B cell (primary cell): ENCODE measurements at regions of chr12 and their contacts with region 1.

Region 1: GRCh38 chr12:31406345-31406744 is 80.4 kb upstream of the SINHCAF start:
- DNase-seq: peak; percentile 55
- ATAC-seq: peak; percentile 26
- H3K4me3 ChIP-seq: no peak overlapping the region
- H3K4me3 Mint-ChIP-seq: peak overlapping the region; percentile 40
- H3K27ac ChIP-seq: peak overlapping the region; percentile 50 to 51
- H3K27ac Mint-ChIP-seq: peak overlapping the region; percentile 28
- H3K4me1 ChIP-seq: peaks cover 23 to 44% of the 10 kb centered on the region in 2 donors
- H3K4me1 Mint-ChIP-seq: peaks cover 24% of the 10 kb centered on the region
- H3K27me3 ChIP-seq: no peaks in the 10 kb centered on the region
- H3K27me3 Mint-ChIP-seq: no peaks in the 10 kb centered on the region
- CTCF ChIP-seq: no peak

Region 2: GRCh38 chr12:30847259-30847658 is 559.1 kb before region 1 on chr12:
- CTCF ChIA-PET with region 1: no interaction called
- POLR2A ChIA-PET with region 1: no interaction called
- intact Hi-C with region 1: loop called (anchors 5 kb)
- DNase-seq: peak; percentile 71
- ATAC-seq: no peak
- H3K4me3 ChIP-seq: no peak overlapping the region
- H3K4me3 Mint-ChIP-seq: no peak overlapping the region
- H3K27ac ChIP-seq: no peak overlapping the region
- H3K27ac Mint-ChIP-seq: no peak overlapping the region
- H3K4me1 ChIP-seq: peaks cover 5 to 16% of the 10 kb centered on the region in 2 donors
- H3K4me1 Mint-ChIP-seq: peaks cover 10% of the 10 kb centered on the region
- H3K27me3 ChIP-seq: no peaks in the 10 kb centered on the region
- H3K27me3 Mint-ChIP-seq: peaks cover 8% of the 10 kb centered on the region
- CTCF ChIP-seq: peak; percentile 81

Region 3: GRCh38 chr12:31297572-31298512 is 108.5 kb before region 1 on chr12:
- CTCF ChIA-PET with region 1: no interaction called
- POLR2A ChIA-PET with region 1: no interaction called
- intact Hi-C with region 1: no loop called
- DNase-seq: no peak
- ATAC-seq: peak; percentile 19
- H3K4me3 ChIP-seq: no peak overlapping the region
- H3K4me3 Mint-ChIP-seq: peak overlapping the region; percentile 75
- H3K27ac ChIP-seq: peak overlapping the region; percentile 27 to 66
- H3K27ac Mint-ChIP-seq: peak overlapping the region; percentile 86
- H3K4me1 ChIP-seq: peaks cover 25 to 27% of the 10 kb centered on the region in 2 donors
- H3K4me1 Mint-ChIP-seq: peaks cover 49% of the 10 kb centered on the region
- H3K27me3 ChIP-seq: no peaks in the 10 kb centered on the region
- H3K27me3 Mint-ChIP-seq: no peaks in the 10 kb centered on the region
- CTCF ChIP-seq: no peak

Region 4: DNA sequence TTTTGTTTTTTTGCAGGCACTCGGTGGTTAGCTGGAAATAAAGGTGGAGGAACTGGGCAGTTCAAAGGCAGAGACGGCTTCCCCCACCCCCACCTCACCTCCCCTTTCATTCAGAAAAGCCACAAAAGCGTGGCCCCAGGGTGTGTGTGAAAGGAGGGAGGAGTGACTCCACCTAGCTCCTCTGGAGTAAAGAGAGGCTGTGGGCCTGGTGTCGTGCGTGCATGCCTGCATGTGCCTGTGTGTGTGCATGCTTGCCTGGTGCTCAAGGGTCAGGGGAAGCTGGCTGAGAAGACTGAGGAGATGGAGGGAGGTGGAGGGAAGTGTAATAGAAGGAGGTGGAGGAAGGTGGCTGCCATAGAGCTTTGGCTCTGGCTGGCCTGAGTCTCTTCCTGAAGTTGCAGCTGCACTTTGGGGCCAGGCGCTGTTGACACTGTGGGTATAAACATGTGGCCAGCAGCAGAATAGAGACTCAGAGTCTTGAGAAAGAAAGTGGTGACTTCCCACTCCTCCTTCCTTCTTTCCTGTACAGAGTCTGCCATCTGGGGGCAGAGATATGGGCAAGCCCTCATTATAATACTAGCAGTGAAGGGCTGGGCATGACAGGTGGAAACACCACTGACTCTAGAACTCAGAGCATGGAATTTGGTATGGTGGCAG is 43.5 kb before region 1 on chr12:
- CTCF ChIA-PET with region 1: no interaction called
- POLR2A ChIA-PET with region 1: no interaction called
- intact Hi-C with region 1: no loop called
- DNase-seq: peak; percentile 60
- ATAC-seq: peak; percentile 80
- H3K4me3 ChIP-seq: peak overlapping the region in 2 of 5 experiments; percentile 19 to 25
- H3K4me3 Mint-ChIP-seq: peak overlapping the region; percentile 59
- H3K27ac ChIP-seq: peak overlapping the region in 1 of 2 donors; percentile 7
- H3K27ac Mint-ChIP-seq: peak overlapping the region; percentile 46
- H3K4me1 ChIP-seq: peaks cover 16 to 21% of the 10 kb centered on the region in 2 donors
- H3K4me1 Mint-ChIP-seq: peaks cover 22% of the 10 kb centered on the region
- H3K27me3 ChIP-seq: no peaks in the 10 kb centered on the region
- H3K27me3 Mint-ChIP-seq: no peaks in the 10 kb centered on the region
- CTCF ChIP-seq: no peak

Region 5: GRCh38 chr12:31589904-31590641 is 183.7 kb after region 1 on chr12:
- CTCF ChIA-PET with region 1: interaction called, 7 read pairs
- POLR2A ChIA-PET with region 1: interaction called, 3 read pairs
- intact Hi-C with region 1: loop called (anchors 1 kb)
- DNase-seq: peak; percentile 78
- ATAC-seq: peak; percentile 29
- H3K4me3 ChIP-seq: peak overlapping the region; percentile 65 to 95 (median 78)
- H3K4me3 Mint-ChIP-seq: peak overlapping the region; percentile 96
- H3K27ac ChIP-seq: peak overlapping the region; percentile 85 to 94
- H3K27ac Mint-ChIP-seq: peak overlapping the region; percentile 99
- H3K4me1 ChIP-seq: peaks cover 49 to 56% of the 10 kb centered on the region in 2 donors
- H3K4me1 Mint-ChIP-seq: peaks cover 59% of the 10 kb centered on the region
- H3K27me3 ChIP-seq: no peaks in the 10 kb centered on the region
- H3K27me3 Mint-ChIP-seq: no peaks in the 10 kb centered on the region
- CTCF ChIP-seq: no peak

Region 6: DNA sequence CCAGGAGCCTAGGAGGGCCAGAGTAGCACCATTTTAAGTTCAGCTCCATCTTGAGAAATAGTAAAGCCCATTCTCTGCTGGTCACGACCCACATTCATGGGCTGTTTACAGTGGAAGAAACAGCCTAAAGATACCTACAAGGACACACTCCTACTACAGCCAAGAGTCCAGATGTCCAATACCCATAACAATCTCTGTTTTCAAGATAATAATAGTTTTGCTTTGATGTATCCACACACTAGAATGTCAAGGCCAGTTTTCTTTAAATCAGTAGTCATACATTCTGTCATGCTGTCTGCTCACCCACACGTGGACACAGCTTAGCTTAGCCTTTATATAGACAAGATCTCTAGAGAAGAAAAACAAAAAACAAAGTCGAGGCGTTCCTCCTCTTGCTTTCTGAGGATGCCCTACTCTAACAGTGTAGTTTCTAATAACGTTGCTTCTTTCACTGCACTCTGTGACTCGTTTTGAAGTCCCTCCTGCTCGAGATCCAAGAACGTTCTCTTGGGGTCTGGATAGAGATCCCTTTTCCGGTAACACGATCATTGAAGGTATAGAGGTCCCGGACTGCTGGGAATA is 235.3 kb after region 1 on chr12:
- CTCF ChIA-PET with region 1: interaction called, 45 read pairs
- POLR2A ChIA-PET with region 1: no interaction called
- intact Hi-C with region 1: loop called (anchors 1 kb)
- DNase-seq: no peak
- ATAC-seq: no peak
- H3K4me3 ChIP-seq: no peak overlapping the region
- H3K4me3 Mint-ChIP-seq: no peak overlapping the region
- H3K27ac ChIP-seq: no peak overlapping the region
- H3K27ac Mint-ChIP-seq: no peak overlapping the region
- H3K4me1 ChIP-seq: peaks cover 17 to 26% of the 10 kb centered on the region in 2 donors
- H3K4me1 Mint-ChIP-seq: peaks cover 21% of the 10 kb centered on the region
- H3K27me3 ChIP-seq: no peaks in the 10 kb centered on the region
- H3K27me3 Mint-ChIP-seq: no peaks in the 10 kb centered on the region
- CTCF ChIP-seq: no peak

Region 7: GRCh38 chr12:31728917-31729640 is 322.7 kb after region 1 on chr12 and contains the start of gene AMN1:
- CTCF ChIA-PET with region 1: interaction called, 6 read pairs
- POLR2A ChIA-PET with region 1: no interaction called
- intact Hi-C with region 1: loop called (anchors 1 kb)
- DNase-seq: peak; percentile 100
- ATAC-seq: peak; percentile 87
- H3K4me3 ChIP-seq: peak within 1 kb of the TSS; percentile 74 to 99 (median 85)
- H3K4me3 Mint-ChIP-seq: peak within 1 kb of the TSS; percentile 98
- H3K27ac ChIP-seq: peak within 1 kb of the TSS; percentile 94 to 96
- H3K27ac Mint-ChIP-seq: peak within 1 kb of the TSS; percentile 98
- H3K4me1 ChIP-seq: peaks cover 38 to 41% of the 10 kb centered on the region in 2 donors
- H3K4me1 Mint-ChIP-seq: peaks cover 73% of the 10 kb centered on the region
- H3K27me3 ChIP-seq: no peaks in the 10 kb centered on the region
- H3K27me3 Mint-ChIP-seq: no peaks in the 10 kb centered on the region
- CTCF ChIP-seq: no peak
- total RNA-seq, gene AMN1: 30.4 and 32.6 TPM in 2 replicates

Region 8: DNA sequence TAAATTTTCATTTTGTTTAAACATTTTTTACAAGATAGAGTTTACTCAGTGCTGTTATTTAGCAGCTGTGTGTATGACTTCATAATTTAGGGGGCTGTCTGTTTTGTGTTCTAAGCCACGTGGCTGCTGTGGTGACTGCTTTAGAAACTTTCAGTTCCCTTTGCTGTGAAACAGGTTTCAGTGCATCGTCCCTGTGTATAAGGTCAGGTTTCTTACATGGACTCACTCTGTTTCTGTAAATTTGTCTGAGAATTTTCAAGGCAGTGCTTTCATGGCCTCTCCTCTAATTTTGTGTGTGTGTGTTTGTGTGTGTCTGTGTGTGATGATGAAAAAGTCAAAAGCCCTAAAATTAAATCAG is 732.7 kb after region 1 on chr12:
- CTCF ChIA-PET with region 1: interaction called, 3 read pairs
- POLR2A ChIA-PET with region 1: interaction called, 12 read pairs
- intact Hi-C with region 1: no loop called
- DNase-seq: peak; percentile 89
- ATAC-seq: peak; percentile 84
- H3K4me3 ChIP-seq: peak overlapping the region; percentile 32 to 72 (median 55)
- H3K4me3 Mint-ChIP-seq: peak overlapping the region; percentile 95
- H3K27ac ChIP-seq: peak overlapping the region; percentile 95 to 97
- H3K27ac Mint-ChIP-seq: peak overlapping the region; percentile 99
- H3K4me1 ChIP-seq: peaks cover 31 to 39% of the 10 kb centered on the region in 2 donors
- H3K4me1 Mint-ChIP-seq: peaks cover 57% of the 10 kb centered on the region
- H3K27me3 ChIP-seq: no peaks in the 10 kb centered on the region
- H3K27me3 Mint-ChIP-seq: no peaks in the 10 kb centered on the region
- CTCF ChIP-seq: no peak

Region 9: DNA sequence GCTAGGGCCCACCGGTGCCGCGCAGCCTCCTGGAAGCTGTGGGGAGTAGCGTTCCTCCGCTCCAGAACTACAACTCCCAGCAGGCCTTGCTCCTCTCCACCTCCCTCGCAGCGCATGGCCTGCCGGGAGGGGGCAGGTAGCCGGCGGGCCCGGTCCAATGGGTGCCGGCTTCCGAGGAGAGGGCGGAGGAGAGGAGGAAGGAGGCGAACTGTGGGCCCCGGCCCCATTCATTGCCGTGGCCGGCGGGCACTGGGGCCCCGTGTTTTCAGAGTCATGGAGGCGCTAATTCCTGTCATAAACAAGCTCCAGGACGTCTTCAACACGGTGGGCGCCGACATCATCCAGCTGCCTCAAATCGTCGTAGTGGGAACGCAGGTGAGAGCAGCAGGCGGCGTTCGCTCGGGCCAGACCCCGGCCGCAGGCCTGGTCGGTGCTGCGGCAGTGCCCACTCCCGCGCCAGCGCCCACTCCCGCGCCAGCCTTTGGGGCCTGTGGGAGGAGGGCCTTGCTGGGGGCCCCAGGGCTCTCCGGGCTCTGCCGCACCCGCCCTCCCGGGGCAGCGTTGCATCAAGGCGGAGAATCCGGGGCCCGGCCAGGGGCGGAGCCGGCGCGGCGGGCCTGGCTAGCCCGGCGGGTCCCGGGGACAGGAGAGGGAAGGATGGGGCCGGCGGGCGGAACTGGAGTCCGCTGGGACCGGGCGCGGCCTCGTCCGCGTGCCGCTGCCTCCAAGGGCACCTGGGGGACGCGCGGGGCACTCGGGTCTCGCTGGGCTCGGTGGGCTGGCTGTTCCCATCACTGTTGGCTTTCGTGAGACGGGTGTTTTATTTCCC is 1273.0 kb after region 1 on chr12 and contains the start of gene DNM1L:
- CTCF ChIA-PET with region 1: no interaction called
- POLR2A ChIA-PET with region 1: no interaction called
- intact Hi-C with region 1: loop called (anchors 5 kb)
- DNase-seq: peak; percentile 93
- ATAC-seq: peak; percentile 96
- H3K4me3 ChIP-seq: peak within 1 kb of the TSS; percentile 62 to 92 (median 86)
- H3K4me3 Mint-ChIP-seq: peak within 1 kb of the TSS; percentile 93
- H3K27ac ChIP-seq: peak within 1 kb of the TSS; percentile 63 to 79
- H3K27ac Mint-ChIP-seq: peak within 1 kb of the TSS; percentile 90
- H3K4me1 ChIP-seq: peaks cover 14 to 23% of the 10 kb centered on the region in 2 donors
- H3K4me1 Mint-ChIP-seq: peaks cover 34% of the 10 kb centered on the region
- H3K27me3 ChIP-seq: no peaks in the 10 kb centered on the region
- H3K27me3 Mint-ChIP-seq: no peaks in the 10 kb centered on the region
- CTCF ChIP-seq: no peak
- total RNA-seq, gene DNM1L: 74.2 and 76.0 TPM in 2 replicates